ENCODE measurements at regions of chr13 and their contacts with region 1.

Region 1: GRCh38 chr13:57698851-57699250 is 67.3 kb downstream of the PCDH17 start:
- DNase-seq: no peak
- H3K4me3 ChIP-seq: no peak overlapping the region
- H3K27ac ChIP-seq: no peak overlapping the region
- H3K4me1 ChIP-seq: no peaks in the 10 kb centered on the region
- H3K27me3 ChIP-seq: no peaks in the 10 kb centered on the region
- CTCF ChIP-seq: no peak

Region 2: DNA sequence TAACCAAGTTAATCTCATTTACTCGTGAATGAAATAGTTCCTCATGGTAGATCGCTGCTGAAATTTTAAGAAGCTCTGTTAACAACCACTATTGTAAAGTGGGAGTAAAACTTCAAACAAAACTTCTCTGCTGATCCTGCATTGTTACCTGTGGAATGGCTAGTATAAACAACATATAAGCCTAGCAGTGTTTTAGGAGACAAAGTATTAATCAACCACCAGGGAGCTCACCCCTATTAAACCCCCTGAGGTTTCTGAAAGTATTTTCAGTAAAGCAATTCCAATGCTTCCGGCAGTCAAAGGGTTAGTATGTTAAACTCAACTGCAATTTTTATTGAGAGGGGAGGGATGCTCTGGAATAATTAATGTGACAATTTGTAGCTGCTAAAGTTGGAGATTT is 97.3 kb before region 1 on chr13:
- CTCF ChIA-PET with region 1: no interaction called
- POLR2A ChIA-PET with region 1: interaction called, 11 read pairs
- intact Hi-C with region 1: no loop called
- DNase-seq: no peak
- H3K4me3 ChIP-seq: no peak overlapping the region
- H3K27ac ChIP-seq: no peak overlapping the region
- H3K4me1 ChIP-seq: no peaks in the 10 kb centered on the region
- H3K27me3 ChIP-seq: no peaks in the 10 kb centered on the region
- CTCF ChIP-seq: no peak